Vagina (tissue), 2 donors: ENCODE measurements at regions of chr7 and their contacts with region 1.

Region 1: DNA sequence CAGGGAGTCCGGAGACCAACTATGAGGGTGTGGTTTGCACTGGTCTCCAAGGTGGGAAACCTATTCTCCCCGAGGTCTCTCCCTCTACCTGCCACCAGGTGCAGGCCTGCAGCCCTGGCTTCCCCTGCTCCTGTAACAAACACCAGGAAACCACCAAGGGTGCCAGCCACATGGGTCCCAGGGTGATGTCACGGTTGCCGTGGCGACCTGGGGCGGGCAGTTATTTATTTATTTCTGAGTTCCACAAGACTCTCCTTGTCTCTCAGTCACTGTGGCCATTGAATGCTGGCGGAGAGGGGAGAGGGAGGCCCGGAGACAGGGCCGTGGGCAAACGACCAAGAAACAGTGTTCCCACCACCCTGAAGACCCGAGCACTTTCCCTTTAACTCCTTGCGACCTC is 27.0 kb downstream of the MMD2 start:
- DNase-seq: no peak
- H3K4me3 ChIP-seq: no peak overlapping the region
- H3K27ac ChIP-seq: no peak overlapping the region
- H3K4me1 ChIP-seq: no peaks in the 10 kb centered on the region
- H3K27me3 ChIP-seq: no peaks in the 10 kb centered on the region
- CTCF ChIP-seq: no peak
- POLR2A ChIP-seq: no peak

Region 2: GRCh38 chr7:3844540-3845148 is 1087.3 kb before region 1 on chr7:
- intact Hi-C with region 1: loop called (anchors 5 kb)
- DNase-seq: no peak
- H3K4me3 ChIP-seq: no peak overlapping the region
- H3K27ac ChIP-seq: no peak overlapping the region
- H3K4me1 ChIP-seq: no peaks in the 10 kb centered on the region
- H3K27me3 ChIP-seq: no peaks in the 10 kb centered on the region
- CTCF ChIP-seq: no peak
- POLR2A ChIP-seq: no peak